Transverse colon (tissue), 4 donors: ENCODE measurements at regions of chr18 and their contacts with region 1.

Region 1: GRCh38 chr18:58180738-58181353 is 136.8 kb downstream of the NEDD4L start:
- DNase-seq: peak; percentile 72
- H3K4me3 ChIP-seq: no peak overlapping the region
- H3K27ac ChIP-seq: no peak overlapping the region
- H3K4me1 ChIP-seq: peaks cover 8 to 46% (median 31%) of the 10 kb centered on the region in 4 donors
- H3K27me3 ChIP-seq: no peaks in the 10 kb centered on the region
- CTCF ChIP-seq: peak; percentile 82 to 93 (median 89)
- EP300 ChIP-seq: no peak
- POLR2A ChIP-seq: no peak

Region 2: GRCh38 chr18:56982766-56983165 is 1198.1 kb before region 1 on chr18:
- in situ Hi-C with region 1: no loop called
- intact Hi-C with region 1: no loop called
- DNase-seq: no peak
- H3K4me3 ChIP-seq: no peak overlapping the region
- H3K27ac ChIP-seq: peak overlapping the region in 2 of 4 donors; percentile 5 to 46
- H3K4me1 ChIP-seq: peaks cover 0 to 44% (median 11%) of the 10 kb centered on the region in 4 donors
- H3K27me3 ChIP-seq: no peaks in the 10 kb centered on the region
- CTCF ChIP-seq: no peak
- EP300 ChIP-seq: no peak
- POLR2A ChIP-seq: no peak

Region 3: GRCh38 chr18:57881818-57882413 is 298.9 kb before region 1 on chr18:
- in situ Hi-C with region 1: no loop called
- intact Hi-C with region 1: loop called (anchors 10 kb)
- DNase-seq: peak; percentile 74
- H3K4me3 ChIP-seq: no peak overlapping the region
- H3K27ac ChIP-seq: no peak overlapping the region
- H3K4me1 ChIP-seq: peaks cover 0 to 3% (median 0%) of the 10 kb centered on the region in 4 donors
- H3K27me3 ChIP-seq: no peaks in the 10 kb centered on the region
- CTCF ChIP-seq: peak; percentile 85 to 91 (median 90)
- EP300 ChIP-seq: no peak
- POLR2A ChIP-seq: no peak

Region 4: GRCh38 chr18:58776084-58776483 is 595.2 kb after region 1 on chr18:
- in situ Hi-C with region 1: no loop called
- intact Hi-C with region 1: loop called (anchors 10 kb)
- DNase-seq: no peak
- H3K4me3 ChIP-seq: no peak overlapping the region
- H3K27ac ChIP-seq: no peak overlapping the region
- H3K4me1 ChIP-seq: peaks cover 0 to under 1% (median 0%) of the 10 kb centered on the region in 4 donors
- H3K27me3 ChIP-seq: no peaks in the 10 kb centered on the region
- CTCF ChIP-seq: no peak
- EP300 ChIP-seq: no peak
- POLR2A ChIP-seq: no peak